Activated B cell treated with CpG ODN at 0.5 μM for 24 hours (primary cell): ENCODE measurements at regions of chr10 and their contacts with region 1.

Region 1: GRCh38 chr10:89643431-89644331 is 1.4 kb downstream of the PANK1 start:
- DNase-seq: peak; percentile 46
- ATAC-seq: peak; percentile 91
- H3K4me3 Mint-ChIP-seq: no peak overlapping the region
- H3K27ac Mint-ChIP-seq: no peak overlapping the region
- H3K4me1 Mint-ChIP-seq: peaks cover 13% of the 10 kb centered on the region
- H3K27me3 Mint-ChIP-seq: no peaks in the 10 kb centered on the region
- CTCF ChIP-seq: no peak

Region 2: GRCh38 chr10:87931836-87932230 is 1711.8 kb before region 1 on chr10:
- CTCF ChIA-PET with region 1: no interaction called
- POLR2A ChIA-PET with region 1: no interaction called
- intact Hi-C with region 1: no loop called
- DNase-seq: no peak
- ATAC-seq: no peak
- H3K4me3 Mint-ChIP-seq: no peak overlapping the region
- H3K27ac Mint-ChIP-seq: no peak overlapping the region
- H3K4me1 Mint-ChIP-seq: peaks cover 51% of the 10 kb centered on the region
- H3K27me3 Mint-ChIP-seq: no peaks in the 10 kb centered on the region
- CTCF ChIP-seq: no peak

Region 3: GRCh38 chr10:89251409-89252224 is 392.1 kb before region 1 on chr10 and contains the start of gene LIPA:
- CTCF ChIA-PET with region 1: no interaction called
- POLR2A ChIA-PET with region 1: no interaction called
- intact Hi-C with region 1: loop called (anchors 2 kb)
- DNase-seq: peak; percentile 90
- ATAC-seq: peak; percentile 93
- H3K4me3 Mint-ChIP-seq: peak within 1 kb of the TSS; percentile 91
- H3K27ac Mint-ChIP-seq: peak within 1 kb of the TSS; percentile 79
- H3K4me1 Mint-ChIP-seq: peaks cover 26% of the 10 kb centered on the region
- H3K27me3 Mint-ChIP-seq: peaks cover 3% of the 10 kb centered on the region
- CTCF ChIP-seq: no peak
- total RNA-seq, gene LIPA: 32.8 and 35.3 TPM in 2 replicates

Region 4: GRCh38 chr10:89591111-89591795 is 52.4 kb before region 1 on chr10:
- CTCF ChIA-PET with region 1: no interaction called
- POLR2A ChIA-PET with region 1: no interaction called
- intact Hi-C with region 1: no loop called
- DNase-seq: no peak
- ATAC-seq: no peak
- H3K4me3 Mint-ChIP-seq: no peak overlapping the region
- H3K27ac Mint-ChIP-seq: no peak overlapping the region
- H3K4me1 Mint-ChIP-seq: no peaks in the 10 kb centered on the region
- H3K27me3 Mint-ChIP-seq: no peaks in the 10 kb centered on the region
- CTCF ChIP-seq: no peak

Region 5: GRCh38 chr10:89668386-89669071 is 24.8 kb after region 1 on chr10:
- CTCF ChIA-PET with region 1: interaction called, 3 read pairs
- POLR2A ChIA-PET with region 1: interaction called, 3 read pairs
- intact Hi-C with region 1: loop called (anchors 1 kb)
- DNase-seq: no peak
- ATAC-seq: no peak
- H3K4me3 Mint-ChIP-seq: no peak overlapping the region
- H3K27ac Mint-ChIP-seq: no peak overlapping the region
- H3K4me1 Mint-ChIP-seq: peaks cover 7% of the 10 kb centered on the region
- H3K27me3 Mint-ChIP-seq: no peaks in the 10 kb centered on the region
- CTCF ChIP-seq: no peak

Region 6: DNA sequence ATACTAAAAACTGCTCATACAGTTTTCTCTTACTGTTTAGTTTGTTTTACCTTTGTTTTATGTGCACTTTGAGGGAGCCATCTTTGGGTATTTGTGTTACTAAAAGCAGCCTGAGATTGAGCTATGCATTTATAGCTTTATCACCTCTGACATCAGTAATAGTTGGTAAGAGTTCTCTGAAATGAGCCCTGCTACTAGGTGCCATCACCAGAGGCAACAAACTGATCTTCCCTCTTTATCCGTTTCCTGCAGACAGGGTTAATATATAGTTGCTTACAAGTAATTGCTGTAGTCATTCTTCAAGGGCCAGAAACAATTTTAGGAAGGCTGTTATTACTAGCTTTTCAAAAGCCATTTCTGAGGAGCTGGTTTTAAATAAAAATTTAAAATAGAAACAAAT is 106.8 kb after region 1 on chr10:
- CTCF ChIA-PET with region 1: no interaction called
- POLR2A ChIA-PET with region 1: no interaction called
- intact Hi-C with region 1: no loop called
- DNase-seq: no peak
- ATAC-seq: no peak
- H3K4me3 Mint-ChIP-seq: no peak overlapping the region
- H3K27ac Mint-ChIP-seq: no peak overlapping the region
- H3K4me1 Mint-ChIP-seq: no peaks in the 10 kb centered on the region
- H3K27me3 Mint-ChIP-seq: no peaks in the 10 kb centered on the region
- CTCF ChIP-seq: no peak

Region 7: DNA sequence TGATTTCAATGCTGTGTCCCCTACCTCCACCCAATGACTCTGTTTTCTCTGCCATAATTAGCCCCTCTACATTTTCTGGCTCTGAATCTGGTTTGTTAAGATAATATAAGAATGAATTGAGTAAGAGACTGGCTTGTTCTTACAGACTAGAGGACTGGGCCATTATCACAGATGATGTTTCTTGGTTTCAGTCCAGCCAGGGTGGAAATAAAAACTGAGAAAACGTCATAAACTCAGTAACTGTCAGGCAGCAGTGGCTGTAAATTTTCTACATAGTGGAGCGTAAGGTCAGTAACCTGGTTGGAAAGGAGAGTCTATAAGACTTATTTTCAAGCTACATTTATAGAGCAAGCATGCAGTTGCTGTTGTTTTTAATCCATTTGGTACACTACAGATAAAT is 728.8 kb after region 1 on chr10:
- CTCF ChIA-PET with region 1: no interaction called
- POLR2A ChIA-PET with region 1: no interaction called
- intact Hi-C with region 1: no loop called
- DNase-seq: no peak
- ATAC-seq: no peak
- H3K4me3 Mint-ChIP-seq: no peak overlapping the region
- H3K27ac Mint-ChIP-seq: no peak overlapping the region
- H3K4me1 Mint-ChIP-seq: no peaks in the 10 kb centered on the region
- H3K27me3 Mint-ChIP-seq: no peaks in the 10 kb centered on the region
- CTCF ChIP-seq: no peak

Region 8: GRCh38 chr10:91409869-91410637 is 1766.4 kb after region 1 on chr10 and contains the start of gene HECTD2:
- CTCF ChIA-PET with region 1: no interaction called
- POLR2A ChIA-PET with region 1: no interaction called
- intact Hi-C with region 1: loop called (anchors 10 kb)
- DNase-seq: peak; percentile 84
- ATAC-seq: peak; percentile 82
- H3K4me3 Mint-ChIP-seq: peak within 1 kb of the TSS; percentile 89
- H3K27ac Mint-ChIP-seq: peak within 1 kb of the TSS; percentile 90
- H3K4me1 Mint-ChIP-seq: peaks cover 13% of the 10 kb centered on the region
- H3K27me3 Mint-ChIP-seq: no peaks in the 10 kb centered on the region
- CTCF ChIP-seq: no peak
- total RNA-seq, gene HECTD2: 8.1 and 8.6 TPM in 2 replicates